WTC11 (cell line): ENCODE measurements at regions of chr1 and their contacts with region 1.

Region 1: GRCh38 chr1:20493839-20494608 is 8.0 kb upstream of the CAMK2N1 start:
- DNase-seq: peak; percentile 93
- ATAC-seq: peak; percentile 82
- H3K4me3 Mint-ChIP-seq: no peak overlapping the region
- H3K27ac Mint-ChIP-seq: no peak overlapping the region
- H3K4me1 Mint-ChIP-seq: peaks cover 4% of the 10 kb centered on the region
- H3K27me3 Mint-ChIP-seq: peaks cover 22% of the 10 kb centered on the region
- CTCF ChIP-seq: peak; percentile 91

Region 2: DNA sequence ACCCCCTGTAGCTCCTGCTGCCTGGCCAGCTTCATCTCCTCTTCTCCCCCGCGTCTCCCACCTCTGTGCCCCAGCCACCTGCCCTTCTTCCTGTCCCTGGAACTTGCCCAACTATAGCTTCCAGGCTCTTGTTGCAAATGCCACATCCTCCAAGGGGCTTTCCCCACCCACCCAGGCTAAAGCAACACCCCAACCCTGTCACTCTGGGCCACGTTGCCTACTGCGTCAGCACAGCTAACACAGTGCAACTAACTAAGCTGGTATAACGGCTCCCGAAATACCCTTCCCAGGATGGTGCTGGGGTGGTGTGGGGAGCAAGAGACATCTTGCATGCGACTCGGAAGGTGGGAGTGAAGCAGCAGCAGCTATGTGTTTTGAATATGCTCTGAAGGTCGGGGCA is 27.8 kb before region 1 on chr1:
- CTCF ChIA-PET with region 1: interaction called, 11 read pairs
- POLR2A ChIA-PET with region 1: no interaction called
- DNase-seq: no peak
- ATAC-seq: no peak
- H3K4me3 Mint-ChIP-seq: no peak overlapping the region
- H3K27ac Mint-ChIP-seq: no peak overlapping the region
- H3K4me1 Mint-ChIP-seq: no peaks in the 10 kb centered on the region
- H3K27me3 Mint-ChIP-seq: peaks cover 35% of the 10 kb centered on the region
- CTCF ChIP-seq: no peak

Region 3: GRCh38 chr1:20507564-20508410 is 13.8 kb after region 1 on chr1 and contains the start of gene MUL1:
- CTCF ChIA-PET with region 1: interaction called, 10 read pairs
- POLR2A ChIA-PET with region 1: no interaction called
- DNase-seq: peak; percentile 96
- ATAC-seq: peak; percentile 87
- H3K4me3 Mint-ChIP-seq: peak within 1 kb of the TSS; percentile 92
- H3K27ac Mint-ChIP-seq: peak within 1 kb of the TSS; percentile 92
- H3K4me1 Mint-ChIP-seq: peaks cover 4% of the 10 kb centered on the region; the same call in 1 of the 2 replicates
- H3K27me3 Mint-ChIP-seq: peaks cover 32% of the 10 kb centered on the region
- CTCF ChIP-seq: no peak
- total RNA-seq, gene MUL1: 21.0 to 22.2 TPM (median 21.9 TPM) in 3 replicates